ENCODE measurements at regions of chr4 and their contacts with region 1.

Region 1: GRCh38 chr4:77052352-77052751 is 23.4 kb downstream of the CCNI start:
- DNase-seq: no peak

Region 2: GRCh38 chr4:77152421-77152820 is 100.1 kb after region 1 on chr4:
- in situ Hi-C with region 1: loop called (anchors 5 kb)
- DNase-seq: no peak